Posterior cingulate gyrus (tissue), 11 donors: ENCODE measurements at regions of chrX and their contacts with region 1.

Region 1: DNA sequence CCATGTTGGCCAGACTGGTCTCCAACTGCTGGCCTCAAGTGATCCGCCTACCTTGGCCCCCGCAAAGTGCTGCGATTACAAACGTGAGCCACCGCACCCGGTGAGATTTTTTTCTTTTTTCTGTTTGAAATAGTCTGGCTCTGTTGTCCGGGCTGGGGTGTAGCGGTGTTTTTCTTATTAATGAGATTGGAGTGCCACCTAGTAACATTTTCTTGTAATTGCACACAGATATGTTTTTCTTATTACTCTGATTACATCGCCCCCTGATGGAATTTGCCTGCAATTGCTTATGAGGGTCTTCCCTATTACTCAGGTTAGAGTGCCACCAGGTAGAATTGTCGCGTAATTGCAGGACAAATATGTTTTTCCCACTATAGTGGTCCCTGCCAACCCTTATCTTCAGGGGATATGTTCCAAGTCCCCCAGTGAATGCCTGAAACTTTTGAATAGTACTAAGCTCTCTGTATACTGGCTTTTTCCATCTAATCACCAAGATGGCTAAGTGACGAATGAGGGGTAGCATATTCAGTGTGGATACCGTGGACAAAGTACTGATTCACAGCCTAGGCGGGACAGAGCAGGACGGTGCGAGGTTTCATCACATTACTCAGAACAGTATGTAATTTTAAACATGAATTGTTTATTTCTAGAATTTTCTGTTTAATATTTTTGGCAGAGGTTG is 8.6 kb upstream of the PDHA1 start:
- DNase-seq: no peak

Region 2: DNA sequence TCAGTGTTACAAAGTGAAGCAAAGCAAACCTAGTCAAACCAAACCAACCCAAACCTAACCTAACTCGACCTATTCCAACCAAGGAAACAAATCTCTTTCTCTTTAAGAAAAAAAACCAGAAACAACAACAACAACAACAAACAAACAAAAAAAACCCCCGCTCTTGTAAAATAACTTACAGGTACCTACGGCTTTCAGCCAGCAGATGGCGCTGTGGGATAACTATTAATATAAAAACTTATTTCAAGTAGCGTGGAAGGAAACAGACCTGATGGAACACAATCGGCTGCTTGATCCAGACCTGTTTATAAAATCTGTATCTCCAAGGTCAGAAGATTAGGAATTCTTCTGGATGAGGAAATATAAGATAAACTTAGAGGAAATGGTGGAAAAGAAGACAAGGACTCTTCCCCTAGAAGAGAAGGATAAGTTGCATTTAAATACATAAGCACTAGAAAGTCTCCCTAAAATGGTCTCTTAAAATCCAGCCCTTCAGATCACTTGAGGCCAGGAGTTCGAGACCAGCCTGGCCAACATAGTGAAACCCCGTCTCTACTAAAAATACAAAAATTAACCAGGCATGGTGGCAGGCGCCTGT is 944.0 kb before region 1 on chrX:
- intact Hi-C with region 1: loop called (anchors 1 kb)
- DNase-seq: peak in 7 of 10 donors; percentile 39 to 89 (median 60)

Region 3: GRCh38 chrX:18931972-18932371 is 403.1 kb before region 1 on chrX:
- intact Hi-C with region 1: loop called (anchors 5 kb)
- DNase-seq: peak in 1 of 10 donors; percentile 20

Region 4: GRCh38 chrX:19410259-19410658 is 75.2 kb after region 1 on chrX:
- intact Hi-C with region 1: no loop called
- DNase-seq: no peak